ENCODE measurements at regions of chr4 and their contacts with region 1.

Region 1: GRCh38 chr4:141307241-141307689 is 86.6 kb downstream of the ZNF330 start:
- DNase-seq: peak; percentile 46 to 55
- H3K4me3 ChIP-seq: no peak overlapping the region
- H3K4me3 Mint-ChIP-seq: no peak overlapping the region
- H3K27ac Mint-ChIP-seq: no peak overlapping the region
- H3K4me1 ChIP-seq: no peaks in the 10 kb centered on the region
- H3K4me1 Mint-ChIP-seq: no peaks in the 10 kb centered on the region
- H3K27me3 ChIP-seq: no peaks in the 10 kb centered on the region
- H3K27me3 Mint-ChIP-seq: peaks cover 3% of the 10 kb centered on the region
- CTCF ChIP-seq: peak; percentile 67 to 82

Region 2: GRCh38 chr4:141158219-141158618 is 149.0 kb before region 1 on chr4:
- CTCF ChIA-PET with region 1: no interaction called
- POLR2A ChIA-PET with region 1: no interaction called
- intact Hi-C with region 1: loop called (anchors 1 kb)
- DNase-seq: peak in 1 of 2 experiments; percentile 18
- H3K4me3 ChIP-seq: no peak overlapping the region
- H3K4me3 Mint-ChIP-seq: no peak overlapping the region
- H3K27ac Mint-ChIP-seq: no peak overlapping the region
- H3K4me1 ChIP-seq: no peaks in the 10 kb centered on the region
- H3K4me1 Mint-ChIP-seq: no peaks in the 10 kb centered on the region
- H3K27me3 ChIP-seq: no peaks in the 10 kb centered on the region
- H3K27me3 Mint-ChIP-seq: peaks cover 11% of the 10 kb centered on the region
- CTCF ChIP-seq: peak; percentile 37 to 47

Region 3: GRCh38 chr4:141435446-141436225 is 128.4 kb after region 1 on chr4:
- CTCF ChIA-PET with region 1: no interaction called
- POLR2A ChIA-PET with region 1: no interaction called
- intact Hi-C with region 1: no loop called
- DNase-seq: no peak
- H3K4me3 ChIP-seq: no peak overlapping the region
- H3K4me3 Mint-ChIP-seq: no peak overlapping the region
- H3K27ac Mint-ChIP-seq: no peak overlapping the region
- H3K4me1 ChIP-seq: no peaks in the 10 kb centered on the region
- H3K4me1 Mint-ChIP-seq: no peaks in the 10 kb centered on the region
- H3K27me3 ChIP-seq: no peaks in the 10 kb centered on the region
- H3K27me3 Mint-ChIP-seq: peaks cover 6% of the 10 kb centered on the region
- CTCF ChIP-seq: no peak

Region 4: DNA sequence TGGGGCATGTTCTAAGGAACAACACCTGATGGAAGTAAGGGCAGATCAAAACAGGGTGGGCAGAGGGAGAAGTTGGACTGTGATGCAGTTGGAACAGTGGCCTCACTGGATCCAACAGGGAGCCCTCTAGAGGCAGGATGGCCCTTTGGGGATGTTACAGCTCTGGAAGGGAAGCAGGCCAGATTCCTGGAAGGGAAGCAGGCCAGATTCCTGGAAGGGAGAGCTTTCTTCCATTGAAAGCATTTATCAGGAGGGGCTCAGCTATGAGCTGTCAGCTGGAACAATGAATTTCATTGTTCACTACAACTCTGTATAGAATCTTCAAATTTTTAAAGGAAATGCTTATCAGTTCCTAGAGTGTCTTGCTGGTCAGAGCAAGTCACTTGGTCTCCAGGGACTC is 346.8 kb after region 1 on chr4:
- CTCF ChIA-PET with region 1: no interaction called
- POLR2A ChIA-PET with region 1: no interaction called
- intact Hi-C with region 1: loop called (anchors 1 kb)
- DNase-seq: peak; percentile 35 to 46
- H3K4me3 ChIP-seq: no peak overlapping the region
- H3K4me3 Mint-ChIP-seq: no peak overlapping the region
- H3K27ac Mint-ChIP-seq: no peak overlapping the region
- H3K4me1 ChIP-seq: no peaks in the 10 kb centered on the region
- H3K4me1 Mint-ChIP-seq: no peaks in the 10 kb centered on the region
- H3K27me3 ChIP-seq: no peaks in the 10 kb centered on the region
- H3K27me3 Mint-ChIP-seq: peaks cover 3% of the 10 kb centered on the region
- CTCF ChIP-seq: peak; percentile 21 to 75

Region 5: DNA sequence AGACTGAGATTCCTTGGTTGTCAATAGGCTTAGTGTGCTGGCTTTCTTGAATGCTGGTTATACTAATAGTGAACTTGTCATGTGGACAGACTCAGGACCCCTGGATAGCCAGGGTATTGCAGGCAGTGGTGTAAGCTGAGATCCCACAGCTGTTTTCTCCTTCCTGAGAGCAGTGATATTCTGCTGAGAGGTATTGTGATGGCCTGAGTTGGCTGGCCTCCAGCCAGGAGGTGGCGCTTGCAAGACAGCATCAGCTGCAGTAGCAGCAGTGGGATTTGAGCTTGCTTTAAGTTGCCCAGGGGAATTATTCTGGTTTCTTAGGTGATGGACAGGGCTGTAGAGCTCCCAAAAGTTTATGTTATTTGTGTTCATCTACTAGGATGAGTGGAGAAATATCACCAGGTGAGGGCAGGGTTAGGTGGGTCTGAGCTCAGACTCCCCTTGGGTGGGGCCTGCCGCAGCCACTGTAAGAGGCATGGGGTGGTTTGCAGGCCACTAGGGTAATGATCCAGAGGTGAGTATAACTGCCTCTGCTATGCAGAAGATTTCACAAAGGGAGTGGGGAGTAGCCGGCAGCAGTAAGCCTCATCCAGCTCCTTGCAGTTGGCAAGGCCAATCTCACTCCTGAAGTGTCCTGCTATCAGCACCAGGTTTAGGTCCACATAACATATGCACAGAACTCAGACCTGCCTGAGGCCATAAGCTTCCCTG is 395.4 kb after region 1 on chr4:
- CTCF ChIA-PET with region 1: no interaction called
- POLR2A ChIA-PET with region 1: no interaction called
- intact Hi-C with region 1: loop called (anchors 2 kb)
- DNase-seq: peak in 1 of 2 experiments; percentile 11
- H3K4me3 ChIP-seq: no peak overlapping the region
- H3K4me3 Mint-ChIP-seq: no peak overlapping the region
- H3K27ac Mint-ChIP-seq: no peak overlapping the region
- H3K4me1 ChIP-seq: no peaks in the 10 kb centered on the region
- H3K4me1 Mint-ChIP-seq: no peaks in the 10 kb centered on the region
- H3K27me3 ChIP-seq: no peaks in the 10 kb centered on the region
- H3K27me3 Mint-ChIP-seq: peaks cover 4% of the 10 kb centered on the region
- CTCF ChIP-seq: no peak

Region 6: GRCh38 chr4:141711014-141711610 is 403.8 kb after region 1 on chr4:
- CTCF ChIA-PET with region 1: no interaction called
- POLR2A ChIA-PET with region 1: no interaction called
- intact Hi-C with region 1: loop called (anchors 2 kb)
- DNase-seq: no peak
- H3K4me3 ChIP-seq: no peak overlapping the region
- H3K4me3 Mint-ChIP-seq: no peak overlapping the region
- H3K27ac Mint-ChIP-seq: no peak overlapping the region
- H3K4me1 ChIP-seq: no peaks in the 10 kb centered on the region
- H3K4me1 Mint-ChIP-seq: no peaks in the 10 kb centered on the region
- H3K27me3 ChIP-seq: no peaks in the 10 kb centered on the region
- H3K27me3 Mint-ChIP-seq: no peaks in the 10 kb centered on the region
- CTCF ChIP-seq: peak; percentile 37 to 56